AG04449 (cell line): ENCODE measurements at regions of chr11 and their contacts with region 1.

Region 1: GRCh38 chr11:94757037-94757735 is 11.0 kb upstream of the AMOTL1 start:
- DNase-seq: no peak
- H3K4me3 ChIP-seq: no peak overlapping the region
- CTCF ChIP-seq: no peak

Region 2: GRCh38 chr11:94741022-94741679 is 16.0 kb before region 1 on chr11:
- CTCF ChIA-PET with region 1: interaction called, 19 read pairs
- POLR2A ChIA-PET with region 1: no interaction called
- DNase-seq: no peak
- H3K4me3 ChIP-seq: peak overlapping the region; percentile 59
- CTCF ChIP-seq: peak; percentile 56

Region 3: GRCh38 chr11:94800414-94800813 is 43.2 kb after region 1 on chr11:
- CTCF ChIA-PET with region 1: no interaction called
- POLR2A ChIA-PET with region 1: no interaction called
- DNase-seq: no peak
- H3K4me3 ChIP-seq: no peak overlapping the region
- CTCF ChIP-seq: no peak